ENCODE measurements at regions of chr20 and their contacts with region 1.

Region 1: DNA sequence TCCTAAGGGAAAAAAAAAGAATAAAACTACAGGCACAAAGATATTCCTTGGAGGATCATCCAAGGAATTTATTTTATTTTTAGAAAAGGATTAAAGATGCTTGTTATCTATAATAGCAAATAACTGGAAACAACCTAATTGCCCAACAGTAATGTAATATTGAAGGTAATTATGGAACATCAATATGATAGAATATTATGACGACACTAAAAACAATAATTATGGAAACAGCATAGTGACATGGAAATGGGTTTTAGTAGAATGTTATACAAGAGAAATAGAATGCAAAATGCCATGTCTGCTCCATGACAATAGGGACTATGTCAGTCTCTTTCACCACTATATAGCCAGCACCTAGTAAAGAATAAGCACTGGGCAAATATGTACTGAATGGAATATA is 51.8 kb upstream of the CBLN4 start:
- DNase-seq: no peak
- ATAC-seq: no peak
- H3K4me3 ChIP-seq: no peak overlapping the region
- H3K27ac ChIP-seq: no peak overlapping the region
- H3K4me1 ChIP-seq: no peaks in the 10 kb centered on the region
- H3K27me3 ChIP-seq: no peaks in the 10 kb centered on the region
- CTCF ChIP-seq: no peak
- EP300 ChIP-seq: no peak
- POLR2A ChIP-seq: no peak
- RAD21 ChIP-seq: no peak

Region 2: DNA sequence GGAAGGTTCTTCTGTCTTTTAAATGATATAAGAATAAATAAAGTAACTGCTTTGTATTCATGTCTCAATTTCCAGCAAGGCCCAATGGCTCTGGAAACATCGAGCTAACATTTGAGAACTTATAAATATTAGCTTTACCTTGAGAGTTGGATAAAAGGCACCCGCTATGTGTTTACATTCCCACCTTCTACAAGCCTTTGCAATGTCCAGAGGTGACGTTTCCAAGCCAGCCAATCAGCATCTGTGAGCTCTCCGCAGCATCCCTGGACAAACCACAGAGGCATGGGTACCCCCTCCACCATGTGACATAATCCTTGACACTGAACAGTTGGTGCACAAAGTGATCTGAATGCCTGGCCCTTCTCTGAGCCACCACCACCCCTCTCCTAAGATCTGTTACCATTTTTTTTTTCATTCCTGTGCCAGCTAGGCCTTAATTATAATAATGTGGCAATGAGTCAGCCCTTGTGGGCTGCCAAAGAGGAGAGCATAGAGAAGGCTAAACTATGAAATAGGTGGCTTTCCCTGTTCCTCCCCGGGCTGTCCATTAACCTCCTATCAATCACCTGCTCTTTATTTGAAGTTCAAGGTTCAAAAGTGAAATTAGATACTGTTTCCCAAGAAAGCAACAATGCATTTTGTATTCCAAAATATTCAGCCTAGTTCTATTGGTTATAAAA is 55.9 kb before region 1 on chr20:
- CTCF ChIA-PET with region 1: no interaction called
- POLR2A ChIA-PET with region 1: no interaction called
- in situ Hi-C with region 1: no loop called
- intact Hi-C with region 1: loop called (anchors 2 kb)
- DNase-seq: peak; percentile 12
- ATAC-seq: peak; percentile 78
- H3K4me3 ChIP-seq: no peak overlapping the region
- H3K27ac ChIP-seq: no peak overlapping the region
- H3K4me1 ChIP-seq: no peaks in the 10 kb centered on the region
- H3K27me3 ChIP-seq: no peaks in the 10 kb centered on the region
- CTCF ChIP-seq: no peak
- EP300 ChIP-seq: no peak
- POLR2A ChIP-seq: no peak
- RAD21 ChIP-seq: no peak

Measured in HepG2 (cell line).